ENCODE measurements at regions of chrX and their contacts with region 1.

Region 1: DNA sequence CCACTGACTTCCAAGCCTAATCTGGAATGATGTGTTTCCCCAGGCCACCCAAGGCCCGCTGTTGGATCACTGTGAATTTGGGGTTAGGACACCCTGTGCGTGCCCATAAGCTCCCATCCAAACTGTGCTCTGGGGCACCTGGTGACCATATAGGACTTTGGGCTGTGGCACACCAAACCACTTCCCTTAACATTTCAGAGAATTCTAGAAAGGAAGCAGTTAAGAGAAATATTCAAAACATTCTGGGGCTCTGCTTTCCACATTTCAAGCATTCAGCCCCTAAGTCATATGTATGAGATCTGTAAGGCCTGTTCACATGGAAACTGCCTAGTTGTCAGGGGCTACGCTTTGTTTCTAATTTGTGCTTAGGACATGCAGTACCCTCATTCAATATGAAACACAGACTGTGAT is 14.4 kb downstream of the VGLL1 start:
- DNase-seq: peak in 2 of 9 experiments; percentile 10 to 25
- ATAC-seq: no peak
- H3K4me3 ChIP-seq: no peak overlapping the region
- H3K4me3 Mint-ChIP-seq: no peak overlapping the region
- H3K27ac ChIP-seq: peak overlapping the region; percentile 51 to 64
- H3K27ac Mint-ChIP-seq: peak overlapping the region; percentile 77
- H3K4me1 ChIP-seq: peaks cover 51% of the 10 kb centered on the region
- H3K4me1 Mint-ChIP-seq: peaks cover 48% of the 10 kb centered on the region
- H3K27me3 ChIP-seq: no peaks in the 10 kb centered on the region
- H3K27me3 Mint-ChIP-seq: no peaks in the 10 kb centered on the region
- CTCF ChIP-seq: no peak

Region 2: GRCh38 chrX:136477026-136477425 is 69.3 kb before region 1 on chrX:
- CTCF ChIA-PET with region 1: no interaction called
- POLR2A ChIA-PET with region 1: no interaction called
- intact Hi-C with region 1: no loop called
- DNase-seq: no peak
- ATAC-seq: no peak
- H3K4me3 ChIP-seq: no peak overlapping the region
- H3K4me3 Mint-ChIP-seq: no peak overlapping the region
- H3K27ac ChIP-seq: no peak overlapping the region
- H3K27ac Mint-ChIP-seq: no peak overlapping the region
- H3K4me1 ChIP-seq: no peaks in the 10 kb centered on the region
- H3K4me1 Mint-ChIP-seq: no peaks in the 10 kb centered on the region
- H3K27me3 ChIP-seq: no peaks in the 10 kb centered on the region
- H3K27me3 Mint-ChIP-seq: no peaks in the 10 kb centered on the region
- CTCF ChIP-seq: no peak

Region 3: GRCh38 chrX:136487647-136488046 is 58.7 kb before region 1 on chrX and contains the start of gene BRS3:
- CTCF ChIA-PET with region 1: no interaction called
- POLR2A ChIA-PET with region 1: no interaction called
- intact Hi-C with region 1: loop called in 1 of 2 experiments (anchors 2 kb)
- DNase-seq: no peak
- ATAC-seq: no peak
- H3K4me3 ChIP-seq: no peak within 1 kb of the TSS
- H3K4me3 Mint-ChIP-seq: no peak within 1 kb of the TSS
- H3K27ac ChIP-seq: no peak within 1 kb of the TSS
- H3K27ac Mint-ChIP-seq: no peak within 1 kb of the TSS
- H3K4me1 ChIP-seq: no peaks in the 10 kb centered on the region
- H3K4me1 Mint-ChIP-seq: no peaks in the 10 kb centered on the region
- H3K27me3 ChIP-seq: peaks cover 0 to 3% of the 10 kb centered on the region in 2 experiments
- H3K27me3 Mint-ChIP-seq: peaks cover 32% of the 10 kb centered on the region
- CTCF ChIP-seq: no peak
- total RNA-seq, gene BRS3: not detected

Region 4: DNA sequence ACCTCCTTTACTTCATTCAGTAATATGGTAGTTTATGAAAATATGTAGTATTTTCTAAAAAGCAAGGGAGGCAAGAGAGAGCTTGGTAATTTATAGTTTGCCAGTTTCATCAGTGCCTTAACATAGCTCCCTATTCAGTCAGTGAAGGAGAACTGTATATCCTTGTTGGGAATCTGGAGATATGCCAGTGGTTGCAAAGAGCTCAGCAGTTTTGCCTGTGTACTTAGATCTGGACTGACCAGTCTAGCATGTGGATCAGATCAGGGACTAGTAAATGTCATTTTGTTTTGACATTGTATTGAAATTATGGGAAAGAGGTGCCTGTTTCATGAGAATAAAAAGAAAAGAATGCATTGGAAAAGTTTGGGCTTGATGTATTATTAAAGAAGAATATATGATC is 1108.1 kb after region 1 on chrX:
- CTCF ChIA-PET with region 1: no interaction called
- POLR2A ChIA-PET with region 1: no interaction called
- intact Hi-C with region 1: no loop called
- DNase-seq: no peak
- ATAC-seq: no peak
- H3K4me3 ChIP-seq: no peak overlapping the region
- H3K4me3 Mint-ChIP-seq: no peak overlapping the region
- H3K27ac ChIP-seq: no peak overlapping the region
- H3K27ac Mint-ChIP-seq: no peak overlapping the region
- H3K4me1 ChIP-seq: no peaks in the 10 kb centered on the region
- H3K4me1 Mint-ChIP-seq: no peaks in the 10 kb centered on the region
- H3K27me3 ChIP-seq: no peaks in the 10 kb centered on the region
- H3K27me3 Mint-ChIP-seq: no peaks in the 10 kb centered on the region
- CTCF ChIP-seq: no peak

Measured in CD8-positive, alpha-beta T cell (primary cell).